ENCODE measurements at regions of chr1 and their contacts with region 1.

Region 1: GRCh38 chr1:161225534-161226319 is at the start of gene TOMM40L:
- DNase-seq: peak; percentile 90
- ATAC-seq: peak; percentile 96
- total RNA-seq, gene TOMM40L: 41.8 TPM

Region 2: DNA sequence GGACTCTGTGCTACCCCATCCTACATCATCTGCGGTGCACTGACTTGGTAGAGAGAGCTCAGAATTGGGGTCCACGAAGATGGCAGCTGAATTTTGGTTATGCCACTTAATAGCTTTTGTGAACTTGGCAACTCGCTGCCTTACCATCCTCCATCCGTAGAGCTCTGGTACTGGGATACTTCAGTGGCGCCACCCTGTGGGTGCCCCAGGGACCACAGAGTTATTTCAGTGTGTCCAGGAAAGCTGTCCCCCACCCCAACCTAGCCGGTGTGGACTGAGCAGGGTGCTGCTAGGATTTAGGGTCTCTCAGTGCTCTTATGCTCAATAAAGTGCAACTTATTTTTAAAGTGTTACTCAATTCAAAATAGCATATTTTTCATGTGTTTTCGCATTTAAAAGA is 170.9 kb before region 1 on chr1:
- intact Hi-C with region 1: no loop called
- DNase-seq: no peak
- ATAC-seq: no peak

Region 3: DNA sequence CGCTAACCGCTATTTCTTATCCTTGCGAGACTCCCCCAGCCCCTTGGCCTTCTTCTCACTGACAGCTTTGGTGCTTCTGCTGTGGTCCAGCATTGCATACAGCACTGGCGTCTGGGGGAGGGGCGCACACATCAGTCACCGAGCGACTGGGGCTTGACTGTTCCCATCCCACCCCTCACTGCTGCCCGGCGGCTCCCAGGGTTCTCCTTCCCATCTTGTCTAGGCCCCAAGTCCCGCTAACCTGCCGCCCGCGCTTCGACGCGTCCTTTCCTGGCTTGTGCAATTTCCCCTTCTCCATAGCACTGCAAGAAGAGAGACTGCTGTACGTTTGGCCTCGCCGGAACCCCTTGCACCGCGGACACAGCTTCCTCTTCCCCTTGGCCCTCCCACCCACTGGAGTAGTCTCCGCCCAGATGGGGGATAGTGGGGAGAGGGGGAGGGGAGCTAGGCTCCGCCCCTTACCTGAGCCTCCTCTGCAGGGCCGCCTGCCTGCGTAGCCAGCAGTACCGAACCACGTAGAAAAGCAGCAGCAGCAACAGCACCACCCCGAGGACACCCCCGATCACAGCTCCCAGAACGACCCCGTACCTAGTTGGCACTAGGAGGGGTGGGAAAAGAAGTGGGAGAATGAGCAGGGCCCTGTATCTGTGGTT is 80.3 kb after region 1 on chr1:
- intact Hi-C with region 1: loop called (anchors 10 kb)
- DNase-seq: peak; percentile 83
- ATAC-seq: peak; percentile 95

Region 4: GRCh38 chr1:161389691-161390558 is 164.2 kb after region 1 on chr1:
- intact Hi-C with region 1: loop called (anchors 10 kb)
- DNase-seq: peak; percentile 98
- ATAC-seq: peak; percentile 95